CD8-positive, alpha-beta T cell (primary cell): ENCODE measurements at regions of chr2 and their contacts with region 1.

Region 1: DNA sequence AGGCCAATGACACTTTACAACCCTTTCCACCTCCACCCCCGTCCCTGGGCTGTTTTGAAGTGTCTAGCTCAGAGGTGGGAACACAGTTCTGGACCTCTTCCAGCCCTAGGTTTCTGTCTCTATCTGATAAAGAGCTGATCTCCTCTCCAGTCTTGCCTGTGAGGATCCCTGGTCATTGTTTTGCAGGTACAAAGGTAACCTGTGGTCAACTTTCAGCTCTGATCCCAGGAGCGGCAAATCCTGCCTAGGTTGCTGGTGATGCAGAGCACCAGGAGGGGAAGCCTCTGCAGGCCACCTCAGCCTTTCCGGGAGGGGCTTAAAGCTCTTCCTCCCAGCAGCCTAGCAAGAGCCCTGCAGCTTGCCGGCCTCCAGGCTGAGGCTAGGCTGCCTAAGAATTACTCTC is 69.8 kb upstream of the WIPF1 start:
- DNase-seq: no peak
- ATAC-seq: no peak
- H3K4me3 ChIP-seq: no peak overlapping the region
- H3K4me3 Mint-ChIP-seq: no peak overlapping the region
- H3K27ac ChIP-seq: no peak overlapping the region
- H3K27ac Mint-ChIP-seq: no peak overlapping the region
- H3K4me1 ChIP-seq: peaks cover 15% of the 10 kb centered on the region
- H3K4me1 Mint-ChIP-seq: peaks cover 26% of the 10 kb centered on the region
- H3K27me3 ChIP-seq: no peaks in the 10 kb centered on the region
- H3K27me3 Mint-ChIP-seq: no peaks in the 10 kb centered on the region
- CTCF ChIP-seq: no peak

Region 2: DNA sequence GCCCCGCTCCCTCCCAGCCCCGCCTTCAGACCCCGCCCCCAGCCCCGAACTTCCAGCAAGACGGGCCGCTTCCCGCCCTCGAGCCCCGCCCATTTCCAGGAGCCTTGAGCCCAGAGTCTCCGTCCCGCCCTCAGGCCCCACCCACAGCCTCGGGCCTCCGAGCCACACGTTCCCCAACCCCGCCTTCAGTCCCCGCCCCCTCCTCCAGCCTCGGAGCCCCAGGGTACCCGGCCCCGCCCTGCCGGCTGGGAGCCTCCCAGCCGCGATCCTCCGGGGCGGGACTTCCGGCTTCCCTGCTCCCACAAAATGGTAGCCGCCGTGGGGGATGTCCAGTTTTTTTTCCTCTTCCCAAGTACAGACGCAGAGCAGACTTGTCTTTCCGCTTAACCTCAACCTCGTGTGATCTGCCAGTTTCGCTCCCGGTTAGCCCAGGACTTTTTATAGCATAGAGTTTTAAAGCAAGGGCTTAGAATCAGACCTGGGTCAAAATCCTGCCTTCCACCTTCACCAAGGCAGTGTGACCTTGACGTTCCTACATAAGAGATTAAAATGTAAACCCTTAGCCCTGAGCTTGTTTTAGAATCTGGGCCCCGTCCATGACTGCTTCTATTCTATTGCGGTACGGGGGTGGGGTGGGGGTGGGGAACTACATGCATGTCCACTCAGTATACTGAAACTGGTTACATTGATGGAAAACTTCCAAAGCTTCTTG is 180.1 kb before region 1 on chr2:
- CTCF ChIA-PET with region 1: no interaction called
- POLR2A ChIA-PET with region 1: no interaction called
- intact Hi-C with region 1: no loop called
- DNase-seq: peak; percentile 77 to 98 (median 97)
- ATAC-seq: peak; percentile 74
- H3K4me3 ChIP-seq: peak overlapping the region; percentile 83 to 86
- H3K4me3 Mint-ChIP-seq: peak overlapping the region; percentile 97
- H3K27ac ChIP-seq: peak overlapping the region; percentile 69 to 85
- H3K27ac Mint-ChIP-seq: peak overlapping the region; percentile 88
- H3K4me1 ChIP-seq: peaks cover 59% of the 10 kb centered on the region
- H3K4me1 Mint-ChIP-seq: peaks cover 73% of the 10 kb centered on the region
- H3K27me3 ChIP-seq: no peaks in the 10 kb centered on the region
- H3K27me3 Mint-ChIP-seq: no peaks in the 10 kb centered on the region
- CTCF ChIP-seq: no peak

Region 3: DNA sequence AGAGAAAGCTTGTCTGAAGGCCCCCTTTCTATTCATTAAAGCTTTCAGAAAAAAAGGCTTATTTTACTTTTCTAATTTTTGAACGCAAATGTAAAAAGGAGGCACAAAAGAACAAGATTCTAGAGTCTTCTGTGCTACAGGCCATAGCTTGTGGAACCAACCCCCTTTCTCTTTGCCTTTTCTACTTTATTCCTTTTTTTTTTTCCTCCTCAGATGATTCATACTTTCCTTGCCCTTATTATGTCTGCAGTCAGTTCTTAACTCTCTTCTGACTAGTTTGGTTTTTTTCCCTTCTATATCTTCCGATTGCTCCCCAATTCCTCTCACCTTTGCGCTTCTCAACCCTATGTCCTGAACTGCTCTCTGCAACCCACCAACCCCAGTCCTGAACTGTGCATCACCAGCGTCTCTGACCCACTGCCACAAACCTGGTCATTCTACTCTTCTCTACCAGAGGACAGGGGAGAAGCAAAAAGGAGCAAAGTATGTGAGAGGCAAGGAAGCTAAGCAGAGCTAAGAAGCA is 12.9 kb before region 1 on chr2:
- CTCF ChIA-PET with region 1: interaction called, 12 read pairs
- POLR2A ChIA-PET with region 1: interaction called, 4 read pairs
- intact Hi-C with region 1: no loop called
- DNase-seq: no peak
- ATAC-seq: no peak
- H3K4me3 ChIP-seq: no peak overlapping the region
- H3K4me3 Mint-ChIP-seq: no peak overlapping the region
- H3K27ac ChIP-seq: no peak overlapping the region
- H3K27ac Mint-ChIP-seq: no peak overlapping the region
- H3K4me1 ChIP-seq: peaks cover 8% of the 10 kb centered on the region
- H3K4me1 Mint-ChIP-seq: peaks cover 26% of the 10 kb centered on the region
- H3K27me3 ChIP-seq: no peaks in the 10 kb centered on the region
- H3K27me3 Mint-ChIP-seq: no peaks in the 10 kb centered on the region
- CTCF ChIP-seq: no peak

Region 4: GRCh38 chr2:174682578-174683391 is 15.4 kb after region 1 on chr2:
- CTCF ChIA-PET with region 1: interaction called, 16 read pairs
- POLR2A ChIA-PET with region 1: interaction called, 10 read pairs
- intact Hi-C with region 1: no loop called
- DNase-seq: peak; percentile 33 to 83 (median 67)
- ATAC-seq: peak; percentile 74
- H3K4me3 ChIP-seq: peak overlapping the region; percentile 73 to 81
- H3K4me3 Mint-ChIP-seq: peak overlapping the region; percentile 91
- H3K27ac ChIP-seq: peak overlapping the region; percentile 41 to 70
- H3K27ac Mint-ChIP-seq: peak overlapping the region; percentile 93
- H3K4me1 ChIP-seq: peaks cover 35% of the 10 kb centered on the region
- H3K4me1 Mint-ChIP-seq: peaks cover 55% of the 10 kb centered on the region
- H3K27me3 ChIP-seq: no peaks in the 10 kb centered on the region
- H3K27me3 Mint-ChIP-seq: no peaks in the 10 kb centered on the region
- CTCF ChIP-seq: no peak

Region 5: DNA sequence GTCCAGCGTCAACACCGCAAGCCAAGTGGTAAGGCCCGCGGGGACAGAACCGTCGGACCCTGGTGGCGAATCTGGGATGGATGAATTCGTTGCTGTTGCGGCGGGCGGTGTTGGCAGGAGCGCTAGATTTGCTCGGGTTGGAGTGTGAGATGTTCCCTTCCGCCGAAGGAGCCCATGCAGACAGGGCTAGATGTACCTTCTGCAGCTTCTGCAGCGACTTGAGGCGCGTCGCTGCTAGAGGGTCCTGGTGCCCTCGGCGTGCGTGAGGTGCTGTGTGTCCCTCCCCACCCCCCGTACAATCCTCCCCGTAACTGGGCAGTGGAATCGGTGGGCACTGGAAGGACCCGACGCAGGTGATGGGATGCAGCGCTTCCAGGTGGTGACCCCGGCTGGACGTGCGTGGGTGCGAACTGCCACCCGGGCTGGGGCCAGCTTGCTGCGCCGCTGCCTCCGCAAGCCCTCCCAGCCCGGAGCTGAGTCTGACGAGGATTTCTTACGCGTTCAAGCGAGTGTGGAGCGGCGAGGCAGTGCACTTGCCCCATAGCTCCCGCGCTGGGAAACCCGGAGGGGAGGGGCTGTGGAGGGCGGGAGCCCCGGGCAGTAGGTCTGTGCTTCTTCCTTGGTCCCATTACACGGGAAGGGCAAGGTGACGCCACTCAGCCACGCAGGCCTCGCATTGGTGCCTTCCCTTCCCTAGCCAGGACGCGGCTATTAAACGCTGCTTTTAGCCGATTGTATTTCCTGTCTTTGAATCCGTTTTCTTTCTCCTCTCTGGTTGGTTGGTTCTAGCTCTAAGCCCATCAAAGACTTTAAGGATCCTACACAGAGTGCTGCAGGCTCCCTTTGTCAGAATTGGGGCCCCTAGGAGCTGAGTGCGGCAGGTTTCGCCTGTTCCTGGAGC is 62.7 kb after region 1 on chr2:
- CTCF ChIA-PET with region 1: no interaction called
- POLR2A ChIA-PET with region 1: no interaction called
- intact Hi-C with region 1: no loop called
- DNase-seq: peak in 8 of 9 experiments; percentile 2 to 61 (median 34)
- ATAC-seq: peak; percentile 76
- H3K4me3 ChIP-seq: peak overlapping the region; percentile 60 to 74
- H3K4me3 Mint-ChIP-seq: peak overlapping the region; percentile 88
- H3K27ac ChIP-seq: no peak overlapping the region
- H3K27ac Mint-ChIP-seq: no peak overlapping the region
- H3K4me1 ChIP-seq: peaks cover 10% of the 10 kb centered on the region
- H3K4me1 Mint-ChIP-seq: peaks cover 20% of the 10 kb centered on the region
- H3K27me3 ChIP-seq: peaks cover 0 to 7% of the 10 kb centered on the region in 2 experiments
- H3K27me3 Mint-ChIP-seq: peaks cover 8% of the 10 kb centered on the region
- CTCF ChIP-seq: no peak